ENCODE measurements at regions of chr10 and their contacts with region 1.

Region 1: GRCh38 chr10:17737027-17737965 is 14.7 kb upstream of the TMEM236 start:
- DNase-seq: peak in 4 of 5 donors; percentile 35 to 83 (median 53)
- ATAC-seq: peak; percentile 34 to 71 (median 42)
- H3K4me3 ChIP-seq: no peak overlapping the region
- H3K27ac ChIP-seq: peak overlapping the region in 5 of 12 donors; percentile 12 to 83 (median 16)
- H3K4me1 ChIP-seq: peaks cover 0 to 26% (median 13%) of the 10 kb centered on the region in 12 donors
- H3K27me3 ChIP-seq: no peaks in the 10 kb centered on the region
- CTCF ChIP-seq: peak; percentile 46 to 82 (median 64)
- POLR2A ChIP-seq: no peak

Region 2: DNA sequence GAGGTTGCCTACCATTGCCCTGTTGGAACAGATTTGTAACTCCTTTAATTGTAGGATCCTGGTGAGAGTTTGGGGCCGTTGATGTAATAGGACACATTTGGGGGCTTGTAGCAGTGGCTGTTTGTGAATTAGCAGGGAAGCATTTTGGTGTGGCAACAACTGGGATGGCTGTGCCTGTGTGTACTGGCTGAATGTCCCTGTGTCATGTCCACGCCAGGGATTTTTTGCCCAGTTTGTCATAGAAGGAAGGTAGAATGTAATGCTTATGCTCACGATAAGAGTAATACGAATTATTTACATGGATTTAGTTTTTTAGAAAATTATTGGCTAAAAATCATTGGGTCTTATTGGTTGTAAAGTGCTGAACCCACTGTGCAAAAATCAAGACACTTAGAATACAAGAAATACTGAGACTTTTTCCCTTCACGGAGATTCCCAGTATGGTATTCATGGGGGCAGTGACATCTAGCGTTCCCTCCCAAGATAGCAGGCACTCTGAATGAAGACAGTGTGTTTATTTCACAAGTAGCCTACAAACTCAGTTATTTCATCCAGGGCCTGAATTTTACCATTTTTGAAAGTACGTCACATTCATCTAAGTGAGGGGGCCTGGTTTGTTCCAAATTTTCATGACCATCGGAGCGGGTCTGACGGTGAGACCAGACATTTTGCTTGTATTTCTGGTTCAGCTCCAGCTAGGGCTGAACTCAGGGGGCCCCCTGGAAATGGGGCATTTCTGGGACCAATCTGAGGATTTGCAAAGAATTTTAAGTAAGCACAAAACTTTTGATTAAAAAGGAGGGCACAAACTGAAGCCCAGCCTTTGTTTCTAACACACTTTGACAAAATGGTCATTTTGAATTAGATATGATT is 477.6 kb after region 1 on chr10:
- intact Hi-C with region 1: loop called in 1 of 10 experiments (anchors 10 kb)
- DNase-seq: peak in 1 of 5 donors; percentile 29
- ATAC-seq: peak in 3 of 4 donors; percentile 70 to 81 (median 80)
- H3K4me3 ChIP-seq: peak overlapping the region in 1 of 12 donors; percentile 20
- H3K27ac ChIP-seq: peak overlapping the region in 1 of 12 donors; percentile 9
- H3K4me1 ChIP-seq: peaks cover 0 to 25% (median 2%) of the 10 kb centered on the region in 12 donors
- H3K27me3 ChIP-seq: no peaks in the 10 kb centered on the region
- CTCF ChIP-seq: peak; percentile 63 to 90 (median 78)
- POLR2A ChIP-seq: no peak